ENCODE measurements at regions of chrX and their contacts with region 1.

Region 1: GRCh38 chrX:38375891-38376290 is 23.5 kb downstream of the OTC start:
- DNase-seq: peak; percentile 4
- H3K4me3 Mint-ChIP-seq: no peak overlapping the region
- H3K27ac Mint-ChIP-seq: no peak overlapping the region
- H3K4me1 Mint-ChIP-seq: no peaks in the 10 kb centered on the region
- H3K27me3 Mint-ChIP-seq: peaks cover 8% of the 10 kb centered on the region
- CTCF ChIP-seq: peak; percentile 23

Region 2: DNA sequence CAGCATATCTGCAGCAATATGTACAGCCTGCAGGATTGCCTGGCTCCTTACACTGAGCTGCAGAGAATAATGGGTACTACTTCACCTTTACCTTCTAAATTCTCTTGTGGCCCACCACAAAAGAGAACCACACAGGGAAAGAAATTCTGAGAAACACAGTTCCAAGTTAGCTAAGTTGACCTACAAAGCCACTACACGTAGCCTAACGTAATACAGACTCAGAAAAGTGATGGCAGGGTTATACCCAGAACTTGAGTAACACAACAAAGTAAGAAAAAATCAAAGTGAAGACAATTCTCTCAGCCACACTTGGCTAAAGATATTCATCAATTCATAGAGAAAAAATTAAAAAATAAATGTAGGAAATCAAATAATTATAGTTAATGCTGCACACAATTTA is 128.8 kb before region 1 on chrX:
- CTCF ChIA-PET with region 1: no interaction called
- intact Hi-C with region 1: no loop called
- DNase-seq: no peak
- H3K4me3 Mint-ChIP-seq: no peak overlapping the region
- H3K27ac Mint-ChIP-seq: no peak overlapping the region
- H3K4me1 Mint-ChIP-seq: no peaks in the 10 kb centered on the region
- H3K27me3 Mint-ChIP-seq: peaks cover 13% of the 10 kb centered on the region
- CTCF ChIP-seq: no peak

Region 3: DNA sequence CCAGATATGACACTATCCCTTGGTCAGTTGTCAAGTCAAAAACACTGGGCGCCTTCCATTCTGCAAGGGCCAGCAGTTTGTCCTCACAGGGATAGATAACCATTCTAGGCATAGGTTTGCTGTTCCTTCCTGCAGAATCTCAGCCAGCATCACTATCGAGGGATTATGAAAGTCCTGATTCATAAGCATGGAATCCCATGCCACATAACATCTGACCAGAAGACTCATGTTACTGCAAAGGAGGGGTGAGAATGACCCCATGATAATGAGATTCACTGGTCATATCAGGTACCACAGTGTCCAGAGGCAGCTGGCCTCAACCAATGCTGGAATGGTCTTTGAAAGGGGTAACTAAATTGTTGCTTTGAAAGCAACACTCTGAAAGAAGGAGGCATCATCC is 61.2 kb after region 1 on chrX:
- CTCF ChIA-PET with region 1: no interaction called
- intact Hi-C with region 1: no loop called
- DNase-seq: no peak
- H3K4me3 Mint-ChIP-seq: no peak overlapping the region
- H3K27ac Mint-ChIP-seq: no peak overlapping the region
- H3K4me1 Mint-ChIP-seq: no peaks in the 10 kb centered on the region
- H3K27me3 Mint-ChIP-seq: peaks cover 14% of the 10 kb centered on the region
- CTCF ChIP-seq: no peak

Region 4: DNA sequence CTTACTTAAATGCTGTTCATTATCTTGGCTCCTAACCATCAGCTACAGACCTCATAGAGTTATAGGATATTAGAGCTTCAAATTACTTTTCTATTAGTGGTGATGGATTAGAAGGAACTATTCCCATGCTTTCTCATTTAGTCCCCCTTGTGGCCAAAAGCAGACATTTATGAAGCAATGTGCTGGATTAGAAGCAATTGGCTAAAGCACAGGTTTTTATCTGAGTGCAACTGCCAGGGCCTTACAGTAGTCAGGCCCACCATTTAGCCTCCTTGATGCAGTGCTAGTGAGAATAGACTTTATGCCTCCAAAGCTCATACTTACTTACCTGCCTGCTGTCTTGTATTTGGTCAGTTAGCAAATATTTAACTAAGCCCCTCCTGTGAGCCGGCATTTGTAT is 278.4 kb after region 1 on chrX:
- CTCF ChIA-PET with region 1: no interaction called
- intact Hi-C with region 1: loop called (anchors 1 kb)
- DNase-seq: peak; percentile 4
- H3K4me3 Mint-ChIP-seq: no peak overlapping the region
- H3K27ac Mint-ChIP-seq: no peak overlapping the region
- H3K4me1 Mint-ChIP-seq: no peaks in the 10 kb centered on the region
- H3K27me3 Mint-ChIP-seq: peaks cover 11% of the 10 kb centered on the region
- CTCF ChIP-seq: peak; percentile 36